Dendritic cell treated with granulocyte-macrophage colony-stimulating factor and Interleukin-4, amounts not matched to agents 40 ng/mL and 50 ng/mL, for 4 days (primary cell): ENCODE measurements at regions of chr7 and their contacts with region 1.

Region 1: GRCh38 chr7:127347567-127348246 is 44.8 kb downstream of the ZNF800 start:
- H3K4me3 Mint-ChIP-seq: peak overlapping the region; percentile 54
- H3K27ac Mint-ChIP-seq: no peak overlapping the region
- H3K4me1 Mint-ChIP-seq: no peaks in the 10 kb centered on the region
- H3K27me3 Mint-ChIP-seq: peaks cover 31% of the 10 kb centered on the region

Region 2: GRCh38 chr7:127440206-127440605 is 92.5 kb after region 1 on chr7:
- intact Hi-C with region 1: loop called (anchors 5 kb)
- H3K4me3 Mint-ChIP-seq: no peak overlapping the region
- H3K27ac Mint-ChIP-seq: no peak overlapping the region
- H3K4me1 Mint-ChIP-seq: no peaks in the 10 kb centered on the region
- H3K27me3 Mint-ChIP-seq: peaks cover 39% of the 10 kb centered on the region